ENCODE measurements at regions of chr17 and their contacts with region 1.

Region 1: GRCh38 chr17:62065598-62066468 is 755 bp upstream of the MED13 start:
- DNase-seq: peak; percentile 97 to 99 (median 98)
- ATAC-seq: peak; percentile 93
- H3K4me3 ChIP-seq: peak overlapping the region; percentile 96
- H3K4me3 Mint-ChIP-seq: peak overlapping the region; percentile 98
- H3K27ac ChIP-seq: peak overlapping the region; percentile 88 to 96
- H3K27ac Mint-ChIP-seq: peak overlapping the region; percentile 98
- H3K4me1 ChIP-seq: peaks cover 27% of the 10 kb centered on the region
- H3K4me1 Mint-ChIP-seq: peaks cover 39% of the 10 kb centered on the region
- H3K27me3 ChIP-seq: no peaks in the 10 kb centered on the region
- H3K27me3 Mint-ChIP-seq: no peaks in the 10 kb centered on the region
- CTCF ChIP-seq: peak; percentile 82

Region 2: GRCh38 chr17:60392042-60392844 is 1673.6 kb before region 1 on chr17 and contains the start of gene USP32:
- CTCF ChIA-PET with region 1: no interaction called
- POLR2A ChIA-PET with region 1: no interaction called
- intact Hi-C with region 1: loop called in 1 of 2 experiments (anchors 10 kb)
- DNase-seq: peak; percentile 93 to 99 (median 97)
- ATAC-seq: peak; percentile 87
- H3K4me3 ChIP-seq: peak within 1 kb of the TSS; percentile 86 to 93
- H3K4me3 Mint-ChIP-seq: peak within 1 kb of the TSS; percentile 95
- H3K27ac ChIP-seq: peak within 1 kb of the TSS; percentile 89 to 90
- H3K27ac Mint-ChIP-seq: peak within 1 kb of the TSS; percentile 93
- H3K4me1 ChIP-seq: peaks cover 18% of the 10 kb centered on the region
- H3K4me1 Mint-ChIP-seq: peaks cover 38% of the 10 kb centered on the region
- H3K27me3 ChIP-seq: no peaks in the 10 kb centered on the region
- H3K27me3 Mint-ChIP-seq: no peaks in the 10 kb centered on the region
- CTCF ChIP-seq: no peak
- total RNA-seq, gene USP32: 24.7 to 26.3 TPM

Region 3: DNA sequence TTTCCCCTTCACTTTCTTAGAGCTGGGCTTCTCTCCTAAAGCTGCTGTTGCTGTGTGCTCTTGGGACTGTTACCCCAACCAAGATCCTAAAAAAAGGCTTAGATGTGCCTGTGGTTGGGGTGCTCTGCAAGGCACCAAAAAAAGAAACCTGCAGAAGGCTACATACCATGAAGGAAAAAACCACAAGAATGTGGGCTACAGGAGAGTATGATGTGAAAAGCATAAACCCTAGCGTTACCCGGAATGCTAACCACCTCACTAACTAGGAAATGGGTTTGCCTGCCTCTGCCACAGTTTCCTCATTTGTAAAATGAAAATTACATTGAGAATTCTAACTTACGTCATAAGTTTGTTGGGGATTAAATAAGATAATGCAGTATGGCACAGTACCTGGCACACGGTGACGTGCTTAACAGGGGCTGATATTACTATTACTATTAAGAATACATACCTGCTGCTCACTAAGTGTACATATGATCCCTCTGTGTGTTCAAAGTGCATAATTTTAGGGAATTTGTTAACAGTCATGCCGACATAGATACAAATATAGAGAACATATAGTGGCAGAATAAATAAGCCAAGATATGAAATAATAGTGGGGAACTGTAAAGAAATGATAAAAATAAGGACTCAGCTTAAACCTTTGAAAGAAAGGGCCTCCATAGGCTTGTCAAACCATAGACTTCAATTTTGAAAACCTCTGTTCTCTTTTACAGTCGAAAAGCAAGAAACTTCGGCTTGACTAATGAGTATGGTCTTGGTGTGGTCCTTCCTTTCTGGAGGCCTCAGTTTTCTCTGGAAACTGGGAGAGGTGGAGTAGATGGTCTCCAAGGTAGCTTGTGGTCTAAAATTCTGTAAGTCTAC is 844.0 kb before region 1 on chr17:
- CTCF ChIA-PET with region 1: no interaction called
- POLR2A ChIA-PET with region 1: no interaction called
- intact Hi-C with region 1: loop called in 1 of 2 experiments (anchors 5 kb)
- DNase-seq: peak in 2 of 9 experiments; percentile 7 to 50
- ATAC-seq: peak; percentile 27
- H3K4me3 ChIP-seq: peak overlapping the region; percentile 9 to 26
- H3K4me3 Mint-ChIP-seq: peak overlapping the region; percentile 80
- H3K27ac ChIP-seq: peak overlapping the region in 1 of 2 experiments; percentile 32
- H3K27ac Mint-ChIP-seq: peak overlapping the region; percentile 16
- H3K4me1 ChIP-seq: peaks cover 27% of the 10 kb centered on the region
- H3K4me1 Mint-ChIP-seq: peaks cover 28% of the 10 kb centered on the region
- H3K27me3 ChIP-seq: no peaks in the 10 kb centered on the region
- H3K27me3 Mint-ChIP-seq: no peaks in the 10 kb centered on the region
- CTCF ChIP-seq: no peak

Region 4: DNA sequence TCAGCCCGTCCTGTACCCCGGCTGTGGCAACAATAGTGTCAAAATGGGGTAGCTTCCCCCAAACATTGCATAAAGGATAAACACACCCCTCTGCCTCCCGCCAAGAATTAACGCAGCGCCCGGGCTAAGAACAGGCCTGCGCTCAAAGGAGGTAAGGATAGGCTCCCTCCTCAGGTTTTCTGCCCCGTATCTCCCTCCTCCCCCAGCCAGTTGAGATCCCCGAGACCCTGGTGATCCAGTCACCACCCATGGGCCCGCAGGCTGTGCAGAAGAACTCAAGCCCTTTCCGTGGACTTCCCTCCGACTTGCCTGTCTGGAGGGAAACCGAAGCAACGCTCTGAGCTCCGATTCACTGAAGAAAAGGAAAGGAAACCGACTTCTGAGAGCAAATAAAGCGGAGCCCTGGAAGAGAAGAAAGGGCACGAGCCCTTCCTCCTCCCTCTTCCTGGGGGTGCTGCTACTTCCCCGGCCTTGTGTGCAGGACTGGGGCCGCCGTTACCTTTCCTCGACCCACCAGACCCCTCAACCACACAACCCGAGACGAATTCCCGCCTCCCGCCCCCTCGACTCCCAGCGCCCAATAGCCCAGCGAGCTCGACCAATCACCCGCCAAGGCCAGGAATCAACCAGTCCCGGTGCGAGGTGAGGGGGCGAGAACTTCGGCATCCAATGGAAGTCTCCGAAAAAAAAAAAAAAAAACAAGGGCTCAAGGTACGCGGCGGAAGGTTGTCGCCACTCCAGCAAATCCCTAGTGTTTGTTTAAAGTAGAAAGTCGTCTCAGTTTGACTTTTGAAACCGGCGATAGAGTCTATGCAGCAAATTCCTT is 202.6 kb before region 1 on chr17 and contains the start of gene BRIP1:
- CTCF ChIA-PET with region 1: interaction called, 3 read pairs
- POLR2A ChIA-PET with region 1: interaction called, 4 read pairs
- intact Hi-C with region 1: loop called (anchors 1 to 5 kb)
- DNase-seq: peak; percentile 71 to 94 (median 86)
- ATAC-seq: peak; percentile 97
- H3K4me3 ChIP-seq: peak within 1 kb of the TSS; percentile 62 to 95
- H3K4me3 Mint-ChIP-seq: peak within 1 kb of the TSS; percentile 97
- H3K27ac ChIP-seq: peak within 1 kb of the TSS; percentile 57 to 66
- H3K27ac Mint-ChIP-seq: peak within 1 kb of the TSS; percentile 89
- H3K4me1 ChIP-seq: peaks cover 6% of the 10 kb centered on the region
- H3K4me1 Mint-ChIP-seq: peaks cover 20% of the 10 kb centered on the region
- H3K27me3 ChIP-seq: no peaks in the 10 kb centered on the region
- H3K27me3 Mint-ChIP-seq: no peaks in the 10 kb centered on the region
- CTCF ChIP-seq: no peak
- total RNA-seq, gene BRIP1: 0.57 to 1.5 TPM

Region 5: DNA sequence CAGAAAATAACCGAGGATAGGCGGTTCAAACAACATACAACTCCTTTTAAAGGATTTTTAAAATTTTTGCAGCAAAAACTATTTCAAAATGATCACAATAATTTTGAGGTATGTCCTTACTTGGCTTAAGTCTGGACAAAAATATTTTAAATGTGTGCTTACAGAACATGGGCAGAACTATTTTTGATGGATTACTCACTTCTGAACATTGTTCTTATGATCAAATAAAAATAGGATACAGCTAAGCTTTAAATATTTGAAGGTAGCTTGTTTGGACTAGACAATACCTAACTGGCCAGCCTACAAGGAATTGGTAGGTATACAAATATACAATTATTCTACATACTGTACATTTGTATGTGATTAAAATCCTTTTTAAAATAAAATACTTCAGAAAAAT is 123.7 kb before region 1 on chr17:
- CTCF ChIA-PET with region 1: no interaction called
- POLR2A ChIA-PET with region 1: no interaction called
- intact Hi-C with region 1: no loop called
- DNase-seq: no peak
- ATAC-seq: no peak
- H3K4me3 ChIP-seq: no peak overlapping the region
- H3K4me3 Mint-ChIP-seq: no peak overlapping the region
- H3K27ac ChIP-seq: no peak overlapping the region
- H3K27ac Mint-ChIP-seq: no peak overlapping the region
- H3K4me1 ChIP-seq: no peaks in the 10 kb centered on the region
- H3K4me1 Mint-ChIP-seq: no peaks in the 10 kb centered on the region
- H3K27me3 ChIP-seq: no peaks in the 10 kb centered on the region
- H3K27me3 Mint-ChIP-seq: no peaks in the 10 kb centered on the region
- CTCF ChIP-seq: no peak

Region 6: DNA sequence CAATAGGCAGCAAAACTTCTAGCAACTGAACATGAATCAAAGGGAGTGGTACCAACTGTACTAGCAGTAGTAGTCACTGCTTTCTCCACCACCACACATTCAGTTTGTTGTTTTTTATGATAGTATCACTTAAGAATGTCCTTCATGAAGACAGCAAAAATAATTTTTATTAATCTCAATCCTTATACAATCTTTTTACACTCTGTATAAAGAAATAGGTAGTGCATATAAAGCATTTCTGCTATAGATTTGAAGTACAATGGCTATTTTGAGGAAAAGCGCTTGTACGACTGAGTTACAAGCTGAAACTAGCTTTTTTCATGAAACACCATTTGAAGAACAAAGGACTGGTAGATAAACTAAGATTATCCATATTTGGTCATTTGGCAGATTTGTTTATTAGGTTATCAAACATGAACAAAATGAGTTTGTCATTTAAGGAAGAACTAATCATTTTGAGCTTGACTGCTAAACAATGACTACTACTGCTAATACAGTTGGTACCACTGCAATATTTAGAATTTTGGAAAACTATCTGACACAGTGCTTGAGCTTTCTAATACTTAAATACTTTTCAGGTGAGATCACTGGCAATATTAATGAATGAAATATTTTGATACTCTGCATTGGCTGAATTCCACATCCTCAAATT is 48.1 kb before region 1 on chr17:
- CTCF ChIA-PET with region 1: no interaction called
- POLR2A ChIA-PET with region 1: no interaction called
- intact Hi-C with region 1: loop called in 1 of 2 experiments (anchors 10 kb)
- DNase-seq: no peak
- ATAC-seq: no peak
- H3K4me3 ChIP-seq: no peak overlapping the region
- H3K4me3 Mint-ChIP-seq: no peak overlapping the region
- H3K27ac ChIP-seq: no peak overlapping the region
- H3K27ac Mint-ChIP-seq: peak overlapping the region; percentile 46
- H3K4me1 ChIP-seq: no peaks in the 10 kb centered on the region
- H3K4me1 Mint-ChIP-seq: peaks cover 6% of the 10 kb centered on the region
- H3K27me3 ChIP-seq: no peaks in the 10 kb centered on the region
- H3K27me3 Mint-ChIP-seq: no peaks in the 10 kb centered on the region
- CTCF ChIP-seq: no peak

Region 7: GRCh38 chr17:62043136-62043535 is 22.7 kb before region 1 on chr17:
- CTCF ChIA-PET with region 1: no interaction called
- POLR2A ChIA-PET with region 1: no interaction called
- intact Hi-C with region 1: loop called (anchors 2 kb)
- DNase-seq: no peak
- ATAC-seq: no peak
- H3K4me3 ChIP-seq: no peak overlapping the region
- H3K4me3 Mint-ChIP-seq: no peak overlapping the region
- H3K27ac ChIP-seq: peak overlapping the region in 1 of 2 experiments; percentile 38
- H3K27ac Mint-ChIP-seq: peak overlapping the region; percentile 24
- H3K4me1 ChIP-seq: peaks cover 25% of the 10 kb centered on the region
- H3K4me1 Mint-ChIP-seq: peaks cover 67% of the 10 kb centered on the region
- H3K27me3 ChIP-seq: no peaks in the 10 kb centered on the region
- H3K27me3 Mint-ChIP-seq: no peaks in the 10 kb centered on the region
- CTCF ChIP-seq: no peak

Region 8: GRCh38 chr17:62478433-62478879 is 412.6 kb after region 1 on chr17 and contains the start of gene TLK2:
- CTCF ChIA-PET with region 1: no interaction called
- POLR2A ChIA-PET with region 1: no interaction called
- intact Hi-C with region 1: loop called in 1 of 2 experiments (anchors 10 kb)
- DNase-seq: peak; percentile 47 to 89 (median 74)
- ATAC-seq: peak; percentile 66
- H3K4me3 ChIP-seq: peak within 1 kb of the TSS; percentile 37 to 55
- H3K4me3 Mint-ChIP-seq: peak within 1 kb of the TSS; percentile 88
- H3K27ac ChIP-seq: peak within 1 kb of the TSS; percentile 61 to 74
- H3K27ac Mint-ChIP-seq: peak within 1 kb of the TSS; percentile 95
- H3K4me1 ChIP-seq: peaks cover 12% of the 10 kb centered on the region
- H3K4me1 Mint-ChIP-seq: peaks cover 40% of the 10 kb centered on the region
- H3K27me3 ChIP-seq: no peaks in the 10 kb centered on the region
- H3K27me3 Mint-ChIP-seq: no peaks in the 10 kb centered on the region
- CTCF ChIP-seq: no peak
- total RNA-seq, gene TLK2: 91.1 to 101 TPM